ENCODE measurements at regions of chr2 and their contacts with region 1.

Region 1: GRCh38 chr2:240232961-240233893 is 92.8 kb upstream of the OTOS start:
- DNase-seq: peak; percentile 91 to 96 (median 94)
- H3K4me3 ChIP-seq: peak overlapping the region; percentile 28
- H3K27ac ChIP-seq: peak overlapping the region; percentile 27 to 37
- H3K4me1 ChIP-seq: peaks cover 27% of the 10 kb centered on the region
- H3K27me3 ChIP-seq: no peaks in the 10 kb centered on the region
- CTCF ChIP-seq: peak; percentile 93 to 95 (median 95)
- EP300 ChIP-seq: no peak
- POLR2A ChIP-seq: peak; percentile 24

Region 2: DNA sequence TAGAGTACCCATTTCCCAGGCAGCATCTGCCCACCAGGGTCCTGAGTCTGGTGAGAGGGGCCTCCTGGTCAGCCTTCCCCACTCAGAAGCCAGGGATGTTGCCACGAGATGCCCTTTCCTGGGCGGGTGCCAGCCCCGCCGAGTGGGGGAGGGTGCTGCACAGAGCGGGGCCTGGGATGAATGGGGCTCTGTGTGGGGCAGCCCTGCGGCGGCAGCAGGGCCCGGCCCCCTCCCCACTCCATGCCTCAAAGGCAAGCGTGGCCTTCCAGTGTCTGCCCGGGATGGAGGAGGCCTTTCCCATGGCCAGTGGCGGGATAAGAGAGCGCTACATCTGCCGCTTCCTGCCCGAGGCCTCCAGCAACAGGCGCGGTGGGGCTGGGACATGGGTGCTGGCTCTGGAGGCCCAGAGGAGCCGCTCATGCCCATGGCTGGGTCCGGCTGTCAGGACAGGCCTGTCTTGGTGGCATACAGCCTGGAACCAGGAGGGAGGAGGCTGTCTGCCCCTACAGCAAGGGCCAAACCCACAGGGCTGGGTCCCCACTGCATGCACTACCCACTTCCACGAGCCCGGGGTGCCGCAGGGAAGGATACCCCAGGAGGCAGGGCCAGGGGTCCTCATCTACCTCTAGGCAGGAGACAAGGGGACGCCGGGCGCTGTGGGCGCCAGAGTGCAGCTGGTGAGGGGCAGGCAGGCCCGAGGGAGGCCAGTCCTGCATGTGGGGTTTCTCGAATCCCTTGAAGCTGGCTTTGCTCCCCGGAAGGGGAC is 107.0 kb after region 1 on chr2:
- intact Hi-C with region 1: loop called in 1 of 4 experiments (anchors 10 kb)
- DNase-seq: no peak
- H3K4me3 ChIP-seq: no peak overlapping the region
- H3K27ac ChIP-seq: no peak overlapping the region
- H3K4me1 ChIP-seq: no peaks in the 10 kb centered on the region
- H3K27me3 ChIP-seq: no peaks in the 10 kb centered on the region
- CTCF ChIP-seq: no peak
- EP300 ChIP-seq: no peak
- POLR2A ChIP-seq: no peak

Region 3: GRCh38 chr2:240434728-240435456 is 201.7 kb after region 1 on chr2:
- intact Hi-C with region 1: loop called (anchors 1 to 2 kb)
- DNase-seq: peak; percentile 97 to 98 (median 98)
- H3K4me3 ChIP-seq: peak overlapping the region; percentile 66
- H3K27ac ChIP-seq: peak overlapping the region; percentile 79 to 91
- H3K4me1 ChIP-seq: peaks cover 17% of the 10 kb centered on the region
- H3K27me3 ChIP-seq: no peaks in the 10 kb centered on the region
- CTCF ChIP-seq: no peak
- EP300 ChIP-seq: no peak
- POLR2A ChIP-seq: peak; percentile 25

Region 4: GRCh38 chr2:240560480-240561326 is 327.5 kb after region 1 on chr2:
- intact Hi-C with region 1: loop called in 1 of 4 experiments (anchors 10 kb)
- DNase-seq: peak; percentile 100
- H3K4me3 ChIP-seq: peak overlapping the region; percentile 98
- H3K27ac ChIP-seq: peak overlapping the region; percentile 97 to 98
- H3K4me1 ChIP-seq: peaks cover 23% of the 10 kb centered on the region
- H3K27me3 ChIP-seq: no peaks in the 10 kb centered on the region
- CTCF ChIP-seq: peak; percentile 23 to 46 (median 42)
- EP300 ChIP-seq: no peak
- POLR2A ChIP-seq: peak; percentile 48

Measured in ovary (tissue), 10 donors.